ENCODE measurements at regions of chr2 and their contacts with region 1.

Region 1: DNA sequence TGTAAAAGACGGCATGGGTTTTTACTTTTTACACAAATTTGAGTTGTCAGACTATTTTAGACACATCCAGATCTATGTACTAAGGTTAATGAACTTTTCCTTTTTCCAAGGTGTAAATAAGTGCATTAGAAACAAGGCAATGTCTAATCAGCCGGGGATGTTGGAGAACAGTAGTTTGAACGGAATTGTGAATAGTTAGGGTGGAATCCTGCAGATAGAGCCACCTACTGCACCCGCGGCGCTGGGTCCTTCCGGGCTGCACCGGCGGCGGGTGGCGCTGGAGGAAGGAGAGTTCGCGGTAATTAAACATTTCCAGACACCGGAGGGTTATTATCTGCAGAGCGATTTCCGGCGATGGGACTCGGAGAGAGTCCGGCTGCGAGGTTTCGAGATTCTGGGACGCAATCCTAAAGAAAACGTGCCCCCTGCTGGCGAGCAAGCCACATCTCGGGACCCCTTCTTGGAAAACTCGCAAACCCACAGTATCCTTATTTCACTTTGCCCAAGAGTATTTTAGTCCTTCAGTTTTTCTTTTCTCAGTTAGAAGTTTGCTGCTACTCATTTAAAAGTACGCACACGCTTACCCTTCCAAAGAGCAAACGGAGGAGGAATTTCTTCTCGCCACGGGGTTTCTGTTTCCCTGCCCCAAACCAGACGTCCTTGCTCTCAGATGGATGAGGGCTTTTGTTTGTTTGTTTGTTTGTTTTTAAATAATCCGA is 4.5 kb upstream of the OSR1 start:
- DNase-seq: peak; percentile 93
- H3K4me3 ChIP-seq: peak overlapping the region; percentile 38 to 61 (median 54)
- H3K27ac ChIP-seq: peak overlapping the region; percentile 58 to 94 (median 76)
- H3K4me1 ChIP-seq: peaks cover 0 to 43% (median 22%) of the 10 kb centered on the region in 4 donors
- H3K27me3 ChIP-seq: peaks cover 0 to 44% (median 0%) of the 10 kb centered on the region in 3 donors
- CTCF ChIP-seq: peak; percentile 26 to 84 (median 76)
- EP300 ChIP-seq: no peak
- POLR2A ChIP-seq: no peak

Region 2: DNA sequence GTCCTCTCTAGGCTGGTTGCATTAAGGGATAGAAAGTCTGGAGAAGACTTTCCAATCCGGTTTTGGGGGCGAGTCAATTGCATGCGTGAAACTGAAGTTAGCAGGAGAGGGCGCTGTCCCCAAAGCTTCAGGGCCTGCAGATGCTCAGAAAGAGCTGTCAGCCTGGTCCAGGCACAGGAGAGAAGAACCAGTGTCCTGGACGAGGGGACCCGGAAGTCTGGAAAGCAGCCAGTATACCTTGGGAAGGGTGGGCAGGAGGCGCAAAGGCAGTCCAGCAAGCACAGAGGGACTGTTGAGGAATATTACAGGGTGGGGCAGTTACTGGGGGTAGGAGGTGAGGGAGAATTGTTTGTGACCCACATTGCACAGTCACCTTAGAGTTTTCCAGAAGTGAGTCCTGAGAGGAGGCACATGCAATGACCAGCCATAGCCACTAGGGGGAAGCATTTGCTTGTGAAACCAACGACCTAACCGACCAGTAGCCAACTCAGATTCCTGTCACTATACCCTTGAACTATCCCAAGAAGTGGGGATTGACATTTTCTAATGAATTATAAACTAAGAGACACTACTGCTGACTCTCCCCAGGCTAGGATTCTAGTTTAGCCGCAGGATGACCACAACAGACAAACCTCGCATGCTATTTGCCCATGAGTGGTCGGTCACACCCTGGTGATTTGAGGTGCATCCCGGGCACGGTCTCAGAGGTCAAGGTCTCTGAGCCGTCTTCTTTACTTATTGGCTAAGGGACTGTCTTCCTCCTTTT is 975.3 kb before region 1 on chr2:
- intact Hi-C with region 1: loop called (anchors 5 kb)
- DNase-seq: peak; percentile 91
- H3K4me3 ChIP-seq: no peak overlapping the region
- H3K27ac ChIP-seq: peak overlapping the region; percentile 51 to 71 (median 64)
- H3K4me1 ChIP-seq: no peaks in the 10 kb centered on the region
- H3K27me3 ChIP-seq: no peaks in the 10 kb centered on the region
- CTCF ChIP-seq: peak; percentile 82 to 99 (median 90)
- EP300 ChIP-seq: no peak
- POLR2A ChIP-seq: no peak

Region 3: GRCh38 chr2:18520451-18521425 is 842.2 kb before region 1 on chr2:
- intact Hi-C with region 1: loop called (anchors 5 kb)
- DNase-seq: peak; percentile 93
- H3K4me3 ChIP-seq: no peak overlapping the region
- H3K27ac ChIP-seq: peak overlapping the region; percentile 57 to 78 (median 73)
- H3K4me1 ChIP-seq: peaks cover 0 to 50% (median 48%) of the 10 kb centered on the region in 4 donors
- H3K27me3 ChIP-seq: no peaks in the 10 kb centered on the region
- CTCF ChIP-seq: peak; percentile 81 to 91 (median 88)
- EP300 ChIP-seq: no peak
- POLR2A ChIP-seq: no peak

Region 4: GRCh38 chr2:18749912-18750526 is 612.9 kb before region 1 on chr2:
- intact Hi-C with region 1: loop called (anchors 1 kb)
- DNase-seq: peak; percentile 77
- H3K4me3 ChIP-seq: no peak overlapping the region
- H3K27ac ChIP-seq: no peak overlapping the region
- H3K4me1 ChIP-seq: peaks cover 0 to 11% (median 5%) of the 10 kb centered on the region in 4 donors
- H3K27me3 ChIP-seq: no peaks in the 10 kb centered on the region
- CTCF ChIP-seq: peak; percentile 53 to 84 (median 72)
- EP300 ChIP-seq: no peak
- POLR2A ChIP-seq: no peak

Region 5: GRCh38 chr2:18814387-18814786 is 548.5 kb before region 1 on chr2:
- intact Hi-C with region 1: no loop called
- DNase-seq: no peak
- H3K4me3 ChIP-seq: no peak overlapping the region
- H3K27ac ChIP-seq: no peak overlapping the region
- H3K4me1 ChIP-seq: no peaks in the 10 kb centered on the region
- H3K27me3 ChIP-seq: no peaks in the 10 kb centered on the region
- CTCF ChIP-seq: no peak
- EP300 ChIP-seq: no peak
- POLR2A ChIP-seq: no peak

Region 6: DNA sequence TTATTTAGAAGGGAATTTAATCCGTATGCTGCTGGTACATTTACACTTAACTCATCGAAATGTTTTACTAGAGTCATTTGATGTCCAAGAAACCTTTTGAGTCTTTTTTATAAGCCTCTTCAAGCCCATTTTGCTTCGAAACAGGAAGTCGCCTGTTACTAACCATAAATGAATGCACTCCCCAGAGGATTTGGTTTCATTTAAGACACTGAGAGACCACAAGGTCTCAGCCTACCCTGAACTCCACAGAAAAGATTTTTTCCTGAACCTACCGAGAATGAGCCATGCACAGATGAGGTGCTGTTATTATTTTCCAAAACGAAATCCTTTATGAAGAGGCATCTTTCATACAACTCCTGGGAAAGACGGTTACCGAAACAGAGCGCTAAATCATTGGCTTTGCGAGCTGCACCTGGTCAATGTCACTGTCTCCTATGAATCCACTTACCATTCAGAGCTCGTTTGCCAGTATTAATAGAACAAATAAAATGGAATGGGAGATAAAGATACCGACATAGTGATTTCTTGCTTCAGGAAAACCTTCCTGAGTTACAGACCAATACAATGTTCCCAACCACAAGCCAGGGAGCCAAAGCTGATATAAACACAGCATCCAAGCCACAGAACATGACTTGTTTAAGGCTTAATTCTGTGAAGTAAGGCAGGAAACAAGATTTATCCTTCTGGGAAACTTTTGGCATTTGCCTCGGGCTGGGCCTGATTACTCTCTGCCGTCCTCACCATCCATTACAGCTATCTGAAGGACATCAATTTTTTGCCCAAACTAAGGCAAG is 386.5 kb before region 1 on chr2:
- intact Hi-C with region 1: loop called (anchors 2 kb)
- DNase-seq: peak; percentile 75
- H3K4me3 ChIP-seq: peak overlapping the region in 3 of 4 donors; percentile 5 to 23 (median 7)
- H3K27ac ChIP-seq: peak overlapping the region; percentile 67 to 81 (median 77)
- H3K4me1 ChIP-seq: peaks cover 0 to 44% (median 37%) of the 10 kb centered on the region in 4 donors
- H3K27me3 ChIP-seq: no peaks in the 10 kb centered on the region
- CTCF ChIP-seq: no peak
- EP300 ChIP-seq: peak; percentile 0 to 75 (median 58)
- POLR2A ChIP-seq: no peak

Region 7: GRCh38 chr2:19336781-19337180 is 26.1 kb before region 1 on chr2:
- intact Hi-C with region 1: no loop called
- DNase-seq: no peak
- H3K4me3 ChIP-seq: no peak overlapping the region
- H3K27ac ChIP-seq: no peak overlapping the region
- H3K4me1 ChIP-seq: no peaks in the 10 kb centered on the region
- H3K27me3 ChIP-seq: no peaks in the 10 kb centered on the region
- CTCF ChIP-seq: no peak
- EP300 ChIP-seq: no peak
- POLR2A ChIP-seq: no peak

Region 8: DNA sequence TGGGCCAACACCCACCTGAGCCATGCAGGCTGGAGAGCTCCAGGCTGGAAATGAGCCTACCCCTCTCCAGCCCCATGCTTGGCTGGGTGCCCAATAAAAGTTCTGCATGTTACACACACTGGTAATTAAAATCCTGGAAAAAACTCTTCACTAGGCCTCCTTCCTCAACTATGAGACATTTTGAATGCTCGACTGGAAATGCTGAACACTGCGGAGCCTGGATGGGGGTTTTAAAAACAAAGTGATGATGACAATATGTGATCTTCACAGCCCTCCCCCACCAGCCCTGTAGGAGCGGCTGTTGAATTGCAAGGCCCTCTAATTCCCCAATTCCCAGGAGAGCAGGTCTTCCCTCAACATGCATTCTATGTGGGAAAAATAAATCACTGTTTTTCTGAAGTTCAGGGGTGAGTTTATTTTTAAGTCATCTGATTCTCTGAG is 359.6 kb after region 1 on chr2:
- intact Hi-C with region 1: no loop called
- DNase-seq: peak; percentile 46
- H3K4me3 ChIP-seq: no peak overlapping the region
- H3K27ac ChIP-seq: peak overlapping the region in 1 of 4 donors; percentile 21
- H3K4me1 ChIP-seq: peaks cover 0 to 12% (median 5%) of the 10 kb centered on the region in 4 donors
- H3K27me3 ChIP-seq: no peaks in the 10 kb centered on the region
- CTCF ChIP-seq: no peak
- EP300 ChIP-seq: no peak
- POLR2A ChIP-seq: no peak

Region 9: DNA sequence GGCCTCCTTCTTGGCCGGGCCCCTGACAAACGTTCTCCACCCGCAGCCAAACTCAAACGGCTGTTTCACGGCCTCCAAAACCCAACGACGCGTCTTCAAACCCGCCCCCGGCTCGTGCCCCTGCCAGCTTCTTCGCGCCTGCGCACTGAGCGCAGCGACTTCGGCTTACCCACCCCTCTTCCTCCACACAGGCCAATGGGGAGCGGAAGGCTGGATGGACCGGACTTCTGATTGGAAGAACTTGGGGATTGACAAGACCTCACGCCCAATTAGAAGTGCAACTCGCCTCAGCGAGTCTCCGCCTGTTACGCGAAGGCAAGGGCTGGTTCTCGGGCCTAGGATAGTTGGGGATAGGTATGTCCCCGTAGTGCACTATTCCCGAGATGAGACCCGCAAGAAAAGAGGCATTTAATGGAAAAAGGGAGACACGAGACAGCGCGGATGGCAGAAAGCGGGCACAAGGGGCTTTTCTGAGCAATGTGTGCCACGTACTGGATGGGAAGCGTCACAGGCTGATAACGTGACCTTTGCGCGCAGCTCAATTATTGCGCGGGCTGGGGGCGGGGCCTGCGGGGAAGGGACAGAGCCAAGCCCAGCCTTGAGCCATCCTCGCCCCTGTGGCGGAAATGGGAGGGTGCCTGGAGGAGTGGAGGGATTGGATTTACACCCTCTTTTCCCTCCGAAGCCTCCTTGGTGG is 688.8 kb after region 1 on chr2 and contains the start of gene LAPTM4A:
- intact Hi-C with region 1: loop called (anchors 5 kb)
- DNase-seq: peak; percentile 100
- H3K4me3 ChIP-seq: peak within 1 kb of the TSS; percentile 55 to 91 (median 82)
- H3K27ac ChIP-seq: peak within 1 kb of the TSS; percentile 95 to 99 (median 98)
- H3K4me1 ChIP-seq: peaks cover 0 to 37% (median 26%) of the 10 kb centered on the region in 4 donors
- H3K27me3 ChIP-seq: no peaks in the 10 kb centered on the region
- CTCF ChIP-seq: peak in 1 of 4 experiments; percentile 44
- EP300 ChIP-seq: peak in 1 of 4 donors; percentile 61
- POLR2A ChIP-seq: peak; percentile 91 to 98
- total RNA-seq, gene LAPTM4A: 181 to 246 (median 227) TPM